A673 (cell line): ENCODE measurements at regions of chr20 and their contacts with region 1.

Region 1: GRCh38 chr20:58702859-58703258 is 10.3 kb downstream of the NPEPL1 start:
- DNase-seq: no peak
- H3K4me3 ChIP-seq: no peak overlapping the region
- H3K27ac ChIP-seq: peak overlapping the region; percentile 10
- H3K4me1 ChIP-seq: no peaks in the 10 kb centered on the region
- H3K27me3 ChIP-seq: no peaks in the 10 kb centered on the region
- CTCF ChIP-seq: no peak

Region 2: GRCh38 chr20:58056021-58056591 is 646.8 kb before region 1 on chr20:
- CTCF ChIA-PET with region 1: no interaction called
- POLR2A ChIA-PET with region 1: interaction called, 14 read pairs
- intact Hi-C with region 1: no loop called
- DNase-seq: no peak
- H3K4me3 ChIP-seq: no peak overlapping the region
- H3K27ac ChIP-seq: no peak overlapping the region
- H3K4me1 ChIP-seq: no peaks in the 10 kb centered on the region
- H3K27me3 ChIP-seq: no peaks in the 10 kb centered on the region
- CTCF ChIP-seq: no peak